Aorta (tissue), 5 donors: ENCODE measurements at regions of chr7 and their contacts with region 1.

Region 1: DNA sequence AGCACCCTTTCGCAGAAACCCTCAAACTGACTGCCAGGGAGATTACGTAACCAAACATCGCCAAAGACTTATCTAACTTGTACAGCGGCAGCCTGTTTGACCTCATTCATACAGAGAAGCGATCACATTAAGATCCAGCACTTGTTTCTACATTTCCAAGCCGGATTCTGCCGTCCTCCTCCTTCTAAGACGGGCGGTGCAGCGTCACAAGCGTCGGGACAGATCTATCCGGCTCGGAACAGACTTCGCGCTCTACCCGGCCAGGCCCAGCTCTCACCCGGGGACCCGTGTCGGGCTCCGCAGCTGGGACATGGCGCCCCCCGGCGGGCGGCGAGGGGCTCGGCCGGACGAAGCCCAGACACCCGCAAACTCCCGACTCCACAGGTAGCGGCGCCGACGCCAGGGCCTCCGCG is 373 bp downstream of the H2AZ2 start:
- DNase-seq: peak; percentile 94 to 96
- ATAC-seq: peak; percentile 91
- H3K4me3 ChIP-seq: peak overlapping the region; percentile 51 to 85
- H3K27ac ChIP-seq: peak overlapping the region; percentile 72 to 96
- H3K4me1 ChIP-seq: no peaks in the 10 kb centered on the region
- H3K27me3 ChIP-seq: no peaks in the 10 kb centered on the region

Region 2: GRCh38 chr7:44581879-44582603 is 265.5 kb before region 1 on chr7 and contains the start of gene TMED4:
- intact Hi-C with region 1: loop called in 1 of 2 experiments (anchors 5 kb)
- DNase-seq: peak; percentile 100
- ATAC-seq: peak; percentile 100
- H3K4me3 ChIP-seq: peak within 1 kb of the TSS; percentile 39 to 56
- H3K27ac ChIP-seq: peak within 1 kb of the TSS; percentile 16 to 83
- H3K4me1 ChIP-seq: no peaks in the 10 kb centered on the region
- H3K27me3 ChIP-seq: no peaks in the 10 kb centered on the region
- total RNA-seq, gene TMED4: 62.2 to 66.8 TPM

Region 3: GRCh38 chr7:44587843-44588711 is 259.4 kb before region 1 on chr7:
- intact Hi-C with region 1: loop called (anchors 1 to 5 kb)
- DNase-seq: no peak
- ATAC-seq: peak; percentile 57
- H3K4me3 ChIP-seq: no peak overlapping the region
- H3K27ac ChIP-seq: no peak overlapping the region
- H3K4me1 ChIP-seq: no peaks in the 10 kb centered on the region
- H3K27me3 ChIP-seq: no peaks in the 10 kb centered on the region

Region 4: DNA sequence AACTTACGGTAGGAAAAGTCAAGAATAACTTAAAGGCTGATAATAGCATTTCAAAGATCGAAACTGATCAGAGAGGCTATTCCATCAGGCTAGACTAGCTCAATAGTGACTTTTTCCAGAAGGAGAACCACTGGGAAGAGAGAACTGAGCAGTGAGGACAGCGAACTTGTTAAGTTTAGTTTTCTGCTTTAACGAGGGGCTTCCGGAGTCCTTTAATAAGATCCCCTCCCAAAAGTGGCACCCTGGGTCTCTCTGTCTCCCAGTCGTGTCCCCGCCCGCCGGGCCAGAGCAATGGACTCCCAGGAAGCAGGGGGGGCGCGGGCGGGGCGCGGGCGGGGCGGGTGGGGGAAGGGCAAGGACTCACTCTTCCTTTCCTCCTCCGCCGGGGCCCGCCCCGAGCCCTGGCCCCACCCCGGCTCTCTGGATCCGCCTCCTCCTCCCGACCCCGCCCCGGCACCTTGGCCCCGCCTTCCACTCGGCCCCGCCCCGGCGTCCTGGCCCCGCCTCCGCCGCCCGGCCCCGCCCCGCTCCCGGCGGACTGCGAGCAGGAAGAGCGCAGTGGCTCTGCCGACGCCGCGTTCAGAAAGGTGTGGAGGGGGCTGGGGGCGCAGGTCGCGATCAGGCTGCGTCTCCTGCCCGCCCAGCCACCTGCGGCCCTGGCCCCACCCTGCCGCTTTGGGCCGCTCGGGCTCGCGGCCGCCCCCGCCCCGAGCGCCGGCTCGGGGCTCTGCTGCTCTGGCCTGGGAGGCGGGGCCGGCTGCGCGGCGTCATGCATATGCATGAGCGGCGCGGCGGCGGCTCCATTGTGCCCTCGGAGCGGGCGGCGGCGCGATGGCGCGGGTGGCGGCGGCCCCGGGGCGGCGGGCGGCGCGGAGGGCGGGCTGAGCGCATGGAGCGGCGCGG is 99.2 kb before region 1 on chr7 and contains the start of gene ZMIZ2:
- intact Hi-C with region 1: loop called in 1 of 2 experiments (anchors 2 kb)
- DNase-seq: peak; percentile 95 to 97
- ATAC-seq: peak; percentile 98
- H3K4me3 ChIP-seq: peak within 1 kb of the TSS; percentile 90 to 97
- H3K27ac ChIP-seq: peak within 1 kb of the TSS; percentile 92 to 98
- H3K4me1 ChIP-seq: no peaks in the 10 kb centered on the region
- H3K27me3 ChIP-seq: no peaks in the 10 kb centered on the region
- total RNA-seq, gene ZMIZ2: 64.5 to 96.6 TPM

Region 5: GRCh38 chr7:44797329-44798251 is 49.9 kb before region 1 on chr7:
- intact Hi-C with region 1: loop called in 1 of 2 experiments (anchors 5 kb)
- DNase-seq: peak; percentile 94 to 95
- ATAC-seq: peak; percentile 92
- H3K4me3 ChIP-seq: peak overlapping the region; percentile 61 to 74
- H3K27ac ChIP-seq: peak overlapping the region; percentile 84 to 93
- H3K4me1 ChIP-seq: peaks cover 0 to 4% of the 10 kb centered on the region in 2 donors
- H3K27me3 ChIP-seq: no peaks in the 10 kb centered on the region

Region 6: GRCh38 chr7:44885394-44886317 is 38.1 kb after region 1 on chr7 and contains the start of gene PURB:
- intact Hi-C with region 1: loop called in 1 of 2 experiments (anchors 2 kb)
- DNase-seq: peak; percentile 96 to 99
- ATAC-seq: peak; percentile 99
- H3K4me3 ChIP-seq: peak within 1 kb of the TSS; percentile 80 to 89
- H3K27ac ChIP-seq: peak within 1 kb of the TSS; percentile 85 to 91
- H3K4me1 ChIP-seq: peaks cover 2 to 11% of the 10 kb centered on the region in 2 donors
- H3K27me3 ChIP-seq: no peaks in the 10 kb centered on the region
- total RNA-seq, gene PURB: 26.4 to 33.9 TPM

Region 7: GRCh38 chr7:44986218-44987053 is 138.9 kb after region 1 on chr7:
- intact Hi-C with region 1: loop called in 1 of 2 experiments (anchors 10 kb)
- DNase-seq: peak; percentile 97 to 99
- ATAC-seq: peak; percentile 99
- H3K4me3 ChIP-seq: peak overlapping the region in 1 of 2 donors; percentile 24
- H3K27ac ChIP-seq: peak overlapping the region; percentile 38 to 92
- H3K4me1 ChIP-seq: peaks cover 0 to 1% of the 10 kb centered on the region in 2 donors
- H3K27me3 ChIP-seq: no peaks in the 10 kb centered on the region